Body of pancreas (tissue), 4 donors: ENCODE measurements at regions of chr22 and their contacts with region 1.

Region 1: DNA sequence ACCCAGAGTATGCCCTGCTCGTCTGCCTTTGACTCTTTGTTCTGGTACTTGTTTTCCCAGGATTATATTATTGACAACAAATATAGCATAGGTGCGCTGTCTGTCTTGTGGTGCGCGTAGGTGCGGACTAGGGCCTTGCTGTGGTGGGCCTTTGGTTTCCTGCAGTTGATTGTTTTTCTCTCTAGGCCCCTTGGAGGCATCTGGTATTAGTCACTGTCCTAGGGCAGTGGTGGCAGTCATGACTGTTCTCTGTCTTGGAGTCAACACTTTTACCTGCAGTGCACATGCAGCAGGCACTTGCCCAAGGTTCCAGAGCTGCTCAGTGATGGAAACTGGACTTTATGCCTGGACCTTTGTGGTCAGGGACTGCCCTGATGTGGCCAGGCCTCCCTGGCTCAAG is 18.6 kb downstream of the PPP6R2 start:
- DNase-seq: no peak
- ATAC-seq: no peak
- H3K4me3 ChIP-seq: no peak overlapping the region
- H3K27ac ChIP-seq: no peak overlapping the region
- H3K4me1 ChIP-seq: peaks cover 26% of the 10 kb centered on the region
- H3K27me3 ChIP-seq: no peaks in the 10 kb centered on the region
- CTCF ChIP-seq: no peak
- POLR2A ChIP-seq: no peak

Region 2: DNA sequence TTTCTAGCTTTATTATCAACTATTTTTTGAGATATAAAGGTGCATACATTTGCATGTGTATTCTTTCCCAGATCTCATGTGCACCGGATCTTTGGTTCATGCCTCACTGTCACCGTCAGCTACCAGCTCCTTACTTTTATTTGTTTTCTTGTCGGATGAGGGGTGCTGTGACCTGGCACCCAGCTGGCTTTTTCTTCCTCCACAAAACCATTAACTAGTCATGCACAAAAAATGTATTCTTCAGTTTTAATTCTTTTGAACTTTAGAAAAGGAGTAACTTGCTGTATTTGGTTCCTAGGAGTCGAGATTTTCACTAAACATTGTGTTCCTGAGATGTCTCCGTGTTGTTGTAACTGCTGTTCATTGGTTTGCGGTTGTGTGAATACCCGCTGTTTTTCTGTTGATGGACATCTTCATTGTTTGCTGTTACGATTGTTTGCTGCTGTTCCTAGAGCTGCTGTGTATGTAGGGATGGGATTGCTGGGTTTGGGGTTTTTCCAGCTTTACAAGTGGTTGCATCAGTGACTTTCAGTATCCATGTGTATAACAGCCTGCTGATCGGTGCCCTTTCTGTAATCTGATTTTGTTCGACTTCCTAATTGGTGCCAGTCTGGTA is 232.5 kb before region 1 on chr22:
- intact Hi-C with region 1: no loop called
- DNase-seq: no peak
- ATAC-seq: no peak
- H3K4me3 ChIP-seq: no peak overlapping the region
- H3K27ac ChIP-seq: no peak overlapping the region
- H3K4me1 ChIP-seq: no peaks in the 10 kb centered on the region
- H3K27me3 ChIP-seq: no peaks in the 10 kb centered on the region
- CTCF ChIP-seq: no peak
- POLR2A ChIP-seq: no peak

Region 3: GRCh38 chr22:50250555-50251476 is 110.9 kb before region 1 on chr22 and contains the start of gene HDAC10:
- intact Hi-C with region 1: no loop called
- DNase-seq: peak; percentile 80 to 86 (median 84)
- ATAC-seq: peak; percentile 84
- H3K4me3 ChIP-seq: peak within 1 kb of the TSS; percentile 44 to 80
- H3K27ac ChIP-seq: peak within 1 kb of the TSS; percentile 15 to 72 (median 62)
- H3K4me1 ChIP-seq: peaks cover 35% of the 10 kb centered on the region
- H3K27me3 ChIP-seq: no peaks in the 10 kb centered on the region
- CTCF ChIP-seq: no peak
- POLR2A ChIP-seq: peak; percentile 27 to 67 (median 67)
- total RNA-seq, gene HDAC10: 31.9 to 128 TPM

Region 4: GRCh38 chr22:50423042-50423815 is 61.5 kb after region 1 on chr22:
- intact Hi-C with region 1: loop called (anchors 10 kb)
- DNase-seq: no peak
- ATAC-seq: no peak
- H3K4me3 ChIP-seq: no peak overlapping the region
- H3K27ac ChIP-seq: no peak overlapping the region
- H3K4me1 ChIP-seq: no peaks in the 10 kb centered on the region
- H3K27me3 ChIP-seq: no peaks in the 10 kb centered on the region
- CTCF ChIP-seq: no peak
- POLR2A ChIP-seq: no peak

Region 5: DNA sequence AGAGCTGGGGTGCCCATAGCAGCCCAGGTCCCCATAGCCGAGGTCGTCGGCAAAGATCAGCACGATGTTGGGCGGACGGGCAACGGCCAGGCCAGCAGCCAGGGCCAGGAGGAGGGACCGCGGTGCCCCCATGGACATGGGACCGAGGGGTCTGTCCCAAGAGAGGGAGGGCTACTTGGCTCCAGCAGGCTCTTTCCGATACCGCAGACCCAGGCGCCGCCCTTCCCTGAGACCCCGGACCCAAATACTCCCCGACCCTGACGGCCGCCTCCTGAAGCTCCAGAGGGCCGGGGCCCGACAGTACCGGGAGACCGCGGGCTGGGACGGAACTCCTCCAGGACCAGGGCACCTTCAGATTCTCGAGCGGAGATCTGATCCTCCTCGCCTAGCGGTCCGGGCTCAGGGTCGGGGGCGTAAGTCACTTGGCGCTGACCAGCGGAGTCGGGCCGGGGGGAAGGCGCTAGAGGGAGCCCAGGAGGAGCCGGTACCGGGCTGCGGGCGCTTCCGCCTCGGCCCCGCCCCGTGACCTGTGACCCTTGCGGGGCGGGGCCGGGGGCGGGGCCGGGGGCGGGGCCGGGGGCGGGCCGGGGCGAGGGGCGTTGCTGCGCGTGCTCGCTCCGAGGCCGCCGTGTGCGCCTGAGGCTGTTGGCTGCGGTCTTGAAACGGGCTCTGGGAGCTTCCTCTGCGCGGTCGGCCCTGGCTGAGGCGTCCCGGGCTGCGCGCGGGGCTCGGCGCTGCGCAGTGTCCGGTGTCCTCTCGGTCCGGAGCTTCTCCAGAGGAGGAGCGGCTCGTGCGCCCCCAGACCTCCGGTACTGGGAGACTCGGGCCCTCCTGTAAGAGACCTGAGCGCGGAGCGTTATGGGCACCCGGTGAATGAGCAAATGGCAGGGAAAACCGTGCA is 266.2 kb after region 1 on chr22 and contains the start of gene ARSA:
- intact Hi-C with region 1: no loop called
- DNase-seq: peak; percentile 81 to 89 (median 86)
- ATAC-seq: peak; percentile 92
- H3K4me3 ChIP-seq: peak within 1 kb of the TSS; percentile 59 to 76
- H3K27ac ChIP-seq: peak within 1 kb of the TSS; percentile 40 to 83 (median 66)
- H3K4me1 ChIP-seq: peaks cover 26% of the 10 kb centered on the region
- H3K27me3 ChIP-seq: no peaks in the 10 kb centered on the region
- CTCF ChIP-seq: peak in 5 of 7 experiments; percentile 7 to 35 (median 16)
- POLR2A ChIP-seq: peak; percentile 43 to 72 (median 66)
- total RNA-seq, gene ARSA: 47.0 to 84.7 TPM